ENCODE measurements at regions of chr12 and their contacts with region 1.

Region 1: DNA sequence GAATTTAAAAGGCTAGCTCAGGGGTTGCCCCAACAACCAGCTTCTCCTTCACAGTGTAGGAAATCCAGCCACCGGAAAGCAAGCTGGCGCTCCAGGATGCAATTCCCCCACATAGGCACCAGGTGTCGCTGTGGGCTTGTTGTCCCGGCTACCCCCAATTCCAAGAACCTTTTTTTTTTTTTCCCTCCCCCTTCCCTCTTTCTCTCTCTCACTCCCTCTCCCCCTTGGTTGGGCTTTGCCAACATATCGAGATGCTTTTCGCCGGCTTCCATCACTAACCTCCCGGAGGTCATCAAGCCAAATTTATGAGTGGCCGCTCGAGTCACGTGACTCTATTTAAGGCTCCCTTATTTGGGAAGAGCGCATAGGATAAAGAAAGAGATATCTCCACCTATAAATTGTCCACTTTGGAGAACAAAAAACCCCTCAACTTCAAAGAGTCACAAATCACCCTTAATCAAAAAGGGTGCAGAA is at the start of gene HOXC5:
- DNase-seq: no peak
- H3K4me3 ChIP-seq: peak within 1 kb of the TSS; percentile 49
- CTCF ChIP-seq: peak; percentile 86

Region 2: DNA sequence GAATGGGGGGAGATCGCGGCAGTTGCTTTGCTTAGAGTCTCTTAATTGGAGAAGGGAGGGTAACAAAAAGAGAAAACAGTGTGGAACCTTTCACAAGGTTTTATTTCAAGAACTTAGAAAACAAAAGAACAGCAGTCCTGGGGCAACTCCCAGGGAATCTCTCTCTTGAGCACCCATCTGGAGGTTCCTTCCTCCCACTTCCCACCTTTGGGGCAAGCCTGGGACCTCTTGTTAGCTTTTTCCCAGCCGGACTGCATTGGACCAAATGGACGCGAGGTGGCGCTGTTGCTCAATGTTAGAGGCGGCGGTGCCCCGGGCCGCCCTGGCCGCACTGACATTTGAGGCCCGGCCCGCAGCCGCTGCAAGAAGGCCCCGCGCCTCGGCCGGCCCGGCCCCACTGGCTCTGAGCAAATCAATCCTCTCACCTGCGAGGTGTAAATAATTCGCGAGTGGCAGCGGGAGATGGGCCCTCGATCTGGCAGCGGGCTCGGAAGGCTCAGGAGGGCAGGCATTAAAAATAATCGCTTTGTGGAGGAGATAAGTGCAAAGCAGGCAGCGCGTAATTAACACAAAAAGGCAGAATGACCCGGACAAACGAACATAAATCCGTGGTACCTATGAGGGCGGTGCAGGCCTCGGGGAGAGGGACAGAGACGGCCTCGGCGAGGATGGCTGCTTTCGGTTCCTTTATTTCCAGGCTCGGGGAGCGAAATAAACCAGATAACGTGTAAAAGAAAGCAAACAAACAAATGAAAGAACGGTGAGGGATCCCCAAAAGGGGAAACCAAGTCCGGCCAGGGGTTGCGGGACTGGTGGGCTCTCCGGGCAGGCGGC is 26.6 kb before region 1 on chr12:
- CTCF ChIA-PET with region 1: interaction called, 385 read pairs
- POLR2A ChIA-PET with region 1: interaction called, 14 read pairs
- DNase-seq: no peak
- H3K4me3 ChIP-seq: peak overlapping the region; percentile 96
- CTCF ChIP-seq: peak; percentile 90

Region 3: DNA sequence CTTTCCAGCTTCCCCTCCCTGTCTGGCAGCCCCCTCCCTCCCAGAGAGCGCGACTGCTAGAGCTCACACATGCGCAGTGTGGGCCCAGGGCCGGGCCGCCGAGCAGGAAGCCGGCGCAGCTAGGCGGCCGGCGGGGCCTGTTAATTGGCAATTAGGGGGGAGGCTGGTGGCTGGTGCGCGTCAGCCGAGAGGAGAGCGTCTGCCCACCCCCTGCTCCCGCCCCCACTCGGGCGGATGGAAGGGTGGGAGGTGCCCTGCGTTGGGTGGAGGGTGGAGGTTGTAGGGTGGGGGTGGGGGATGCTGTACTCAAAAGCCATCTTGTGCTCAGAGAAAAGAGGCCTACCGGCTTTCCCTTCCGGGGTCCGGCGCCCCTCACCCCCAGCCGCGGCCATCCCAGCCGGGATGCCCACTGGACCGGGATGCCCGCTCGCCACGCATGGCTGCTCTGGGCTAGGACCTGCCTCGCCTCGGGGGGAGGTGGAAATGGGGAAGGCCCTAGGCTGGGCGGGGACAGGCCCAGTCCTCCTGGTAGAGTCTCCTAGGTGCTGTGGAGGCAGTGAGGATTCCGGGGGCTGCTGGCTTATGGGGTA is 14.7 kb before region 1 on chr12:
- CTCF ChIA-PET with region 1: interaction called, 385 read pairs
- POLR2A ChIA-PET with region 1: interaction called, 34 read pairs
- DNase-seq: peak; percentile 82
- H3K4me3 ChIP-seq: peak overlapping the region; percentile 88
- CTCF ChIP-seq: no peak

Region 4: DNA sequence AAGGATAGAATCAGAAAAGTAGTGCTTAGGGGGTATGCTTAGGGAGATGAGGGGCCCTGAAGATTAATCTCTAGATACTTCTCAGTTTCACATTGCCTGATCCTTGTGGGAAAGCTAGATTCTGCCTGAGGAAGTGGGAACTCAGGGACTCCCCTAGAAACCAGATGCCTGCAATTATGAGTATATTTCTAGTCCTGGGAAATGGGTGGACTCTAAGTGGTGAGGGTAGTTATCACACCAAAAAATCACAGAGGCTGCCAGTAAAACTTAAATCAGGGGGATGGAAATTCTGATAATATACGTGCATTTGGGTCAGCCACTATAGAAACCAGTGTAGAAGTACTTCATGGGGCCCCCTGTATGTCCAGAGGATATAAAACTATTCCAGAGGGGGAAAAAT is 39.3 kb after region 1 on chr12:
- CTCF ChIA-PET with region 1: interaction called, 10 read pairs
- POLR2A ChIA-PET with region 1: no interaction called
- DNase-seq: no peak
- H3K4me3 ChIP-seq: no peak overlapping the region
- CTCF ChIP-seq: no peak

Region 5: DNA sequence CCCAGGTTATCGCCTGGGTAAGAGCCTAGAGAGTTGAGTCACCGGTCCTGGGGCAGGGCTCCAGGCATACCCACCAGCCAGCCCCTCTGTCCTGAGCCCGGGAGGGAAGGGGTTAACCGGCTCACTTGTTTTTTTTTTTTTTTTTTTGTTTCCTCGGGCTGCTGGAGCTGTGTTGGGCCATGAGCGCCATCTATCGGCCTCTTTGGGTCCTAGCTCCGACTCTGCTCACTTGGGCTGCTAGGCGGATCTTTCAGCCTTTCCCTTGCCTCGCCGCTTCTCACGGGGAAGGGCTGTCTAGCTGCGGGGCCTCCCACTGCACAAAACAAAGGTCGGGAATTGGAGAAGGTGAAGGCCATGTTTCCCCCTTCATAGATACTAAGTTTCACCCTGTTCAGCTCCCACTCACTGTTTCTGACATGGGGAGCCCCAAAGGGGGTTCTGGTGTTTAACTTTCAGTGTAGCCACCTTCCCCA is 158.9 kb after region 1 on chr12:
- CTCF ChIA-PET with region 1: interaction called, 908 read pairs
- POLR2A ChIA-PET with region 1: interaction called, 16 read pairs
- DNase-seq: no peak
- H3K4me3 ChIP-seq: no peak overlapping the region
- CTCF ChIP-seq: peak; percentile 81

Region 6: GRCh38 chr12:54497883-54498282 is 465.2 kb after region 1 on chr12:
- CTCF ChIA-PET with region 1: no interaction called
- POLR2A ChIA-PET with region 1: no interaction called
- DNase-seq: no peak
- H3K4me3 ChIP-seq: no peak overlapping the region
- CTCF ChIP-seq: no peak

Measured in AG04449 (cell line).